A673 (cell line): ENCODE measurements at regions of chr11 and their contacts with region 1.

Region 1: GRCh38 chr11:8566613-8567210 is 27.3 kb downstream of the STK33 start:
- DNase-seq: peak; percentile 61
- H3K4me3 ChIP-seq: no peak overlapping the region
- H3K27ac ChIP-seq: no peak overlapping the region
- H3K4me1 ChIP-seq: no peaks in the 10 kb centered on the region
- H3K27me3 ChIP-seq: peaks cover 66% of the 10 kb centered on the region
- CTCF ChIP-seq: peak; percentile 61

Region 2: DNA sequence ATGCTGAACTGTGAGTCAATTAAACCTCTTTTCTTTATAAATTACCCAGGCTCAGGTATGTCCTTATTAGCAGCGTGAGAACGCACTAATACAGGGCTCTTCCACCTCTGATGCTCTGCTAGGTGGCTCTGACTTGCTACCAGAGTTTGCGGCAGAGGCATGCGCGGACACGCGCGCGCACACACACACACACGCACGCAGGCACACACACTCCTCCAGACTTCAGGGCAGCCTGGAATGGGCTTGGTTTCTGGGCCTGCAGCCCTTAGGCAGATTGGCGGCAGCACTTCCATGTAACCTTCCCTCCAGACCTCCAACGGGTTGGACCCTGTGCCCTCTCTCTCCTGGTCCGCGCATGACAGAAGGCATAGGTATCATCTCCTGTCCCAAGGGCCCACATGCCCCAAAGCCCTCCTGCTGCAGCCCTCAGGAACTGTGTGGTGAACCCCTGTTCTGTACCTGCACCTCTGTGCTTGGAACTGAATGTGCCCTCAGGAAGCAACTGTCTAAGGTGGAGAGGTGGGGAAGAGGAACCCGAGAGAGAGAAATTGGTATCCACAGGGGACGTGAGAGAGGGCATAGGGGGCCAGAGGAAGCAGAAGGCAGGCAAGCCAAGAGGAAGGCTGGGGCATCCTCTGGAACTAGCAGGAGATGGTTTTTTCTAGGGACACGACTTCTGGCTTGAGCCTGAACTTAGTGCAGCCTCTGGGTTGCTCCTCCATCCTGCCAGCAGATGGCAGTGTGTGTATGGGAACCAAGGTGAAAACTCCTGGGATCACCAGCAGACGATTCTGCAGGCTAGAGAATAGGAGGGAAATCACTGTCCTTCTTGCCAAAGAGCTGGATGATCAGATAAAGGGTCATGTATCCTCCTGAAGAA is 374.5 kb before region 1 on chr11:
- CTCF ChIA-PET with region 1: no interaction called
- POLR2A ChIA-PET with region 1: no interaction called
- intact Hi-C with region 1: loop called (anchors 1 kb)
- DNase-seq: peak; percentile 61
- H3K4me3 ChIP-seq: no peak overlapping the region
- H3K27ac ChIP-seq: no peak overlapping the region
- H3K4me1 ChIP-seq: no peaks in the 10 kb centered on the region
- H3K27me3 ChIP-seq: peaks cover 13% of the 10 kb centered on the region
- CTCF ChIP-seq: peak; percentile 77

Region 3: GRCh38 chr11:8225589-8226036 is 341.1 kb before region 1 on chr11:
- CTCF ChIA-PET with region 1: interaction called, 3 read pairs
- POLR2A ChIA-PET with region 1: no interaction called
- intact Hi-C with region 1: loop called (anchors 1 kb)
- DNase-seq: peak; percentile 65
- H3K4me3 ChIP-seq: no peak overlapping the region
- H3K27ac ChIP-seq: no peak overlapping the region
- H3K4me1 ChIP-seq: no peaks in the 10 kb centered on the region
- H3K27me3 ChIP-seq: peaks cover 7% of the 10 kb centered on the region
- CTCF ChIP-seq: peak; percentile 87

Region 4: GRCh38 chr11:8328848-8329330 is 237.8 kb before region 1 on chr11:
- CTCF ChIA-PET with region 1: interaction called, 5 read pairs
- POLR2A ChIA-PET with region 1: no interaction called
- intact Hi-C with region 1: loop called (anchors 5 kb)
- DNase-seq: peak; percentile 89
- H3K4me3 ChIP-seq: no peak overlapping the region
- H3K27ac ChIP-seq: no peak overlapping the region
- H3K4me1 ChIP-seq: peaks cover 26% of the 10 kb centered on the region
- H3K27me3 ChIP-seq: peaks cover 79% of the 10 kb centered on the region
- CTCF ChIP-seq: peak; percentile 91

Region 5: GRCh38 chr11:8384199-8384821 is 182.4 kb before region 1 on chr11:
- CTCF ChIA-PET with region 1: no interaction called
- POLR2A ChIA-PET with region 1: no interaction called
- intact Hi-C with region 1: loop called (anchors 5 kb)
- DNase-seq: peak; percentile 58
- H3K4me3 ChIP-seq: no peak overlapping the region
- H3K27ac ChIP-seq: no peak overlapping the region
- H3K4me1 ChIP-seq: no peaks in the 10 kb centered on the region
- H3K27me3 ChIP-seq: peaks cover 2% of the 10 kb centered on the region
- CTCF ChIP-seq: peak; percentile 36; the same call in 1 of the 2 replicates